ENCODE measurements at regions of chr1 and their contacts with region 1.

Region 1: GRCh38 chr1:202835548-202836090 is 24.9 kb downstream of the PCAT6 start:
- DNase-seq: peak; percentile 65
- H3K4me3 Mint-ChIP-seq: peak overlapping the region; percentile 40
- H3K27ac Mint-ChIP-seq: peak overlapping the region; percentile 62
- H3K4me1 Mint-ChIP-seq: peaks cover 65% of the 10 kb centered on the region
- H3K27me3 Mint-ChIP-seq: no peaks in the 10 kb centered on the region

Region 2: DNA sequence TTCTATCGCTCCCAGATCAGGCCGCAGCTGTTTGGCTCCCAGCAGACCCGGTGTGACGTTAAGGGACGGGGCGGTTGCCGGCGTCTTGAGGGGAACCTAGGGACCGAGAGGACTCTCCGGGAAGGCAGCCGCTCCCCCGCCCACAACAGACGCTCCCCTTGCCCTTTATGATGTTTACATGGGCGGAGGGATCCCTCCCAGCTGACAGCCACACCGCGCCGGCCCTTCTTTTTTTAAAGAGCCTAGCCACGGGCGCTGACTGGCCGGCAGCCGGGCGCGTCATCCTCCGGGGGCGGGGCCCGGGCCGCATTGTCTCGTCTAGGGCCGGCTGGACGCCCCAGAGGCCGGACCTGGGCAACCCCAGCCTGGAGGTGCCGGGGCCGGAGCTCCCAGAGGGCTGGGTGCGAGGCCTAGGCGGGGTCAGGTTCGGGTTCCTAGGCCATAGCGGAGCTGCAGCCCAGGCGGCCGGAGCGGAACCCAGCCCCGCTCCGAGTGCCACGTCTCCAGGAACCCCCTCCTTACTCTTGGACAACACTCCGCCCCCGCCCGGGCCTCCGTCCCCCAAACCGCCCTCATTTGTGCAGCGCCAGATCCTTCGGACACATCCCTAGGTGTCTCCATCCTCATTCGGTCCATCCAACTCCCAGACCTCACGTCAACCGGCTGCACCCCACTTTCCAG is 24.9 kb before region 1 on chr1 and contains the start of gene PCAT6:
- CTCF ChIA-PET with region 1: interaction called, 3 read pairs
- POLR2A ChIA-PET with region 1: interaction called, 20 read pairs
- DNase-seq: peak; percentile 91
- H3K4me3 Mint-ChIP-seq: peak within 1 kb of the TSS; percentile 98
- H3K27ac Mint-ChIP-seq: peak within 1 kb of the TSS; percentile 74
- H3K4me1 Mint-ChIP-seq: peaks cover 42% of the 10 kb centered on the region
- H3K27me3 Mint-ChIP-seq: peaks cover 27% of the 10 kb centered on the region
- total RNA-seq, gene PCAT6: 1.9 to 2.7 TPM

Region 3: GRCh38 chr1:202888531-202889360 is 53.1 kb after region 1 on chr1 and contains the start of gene RABIF:
- CTCF ChIA-PET with region 1: no interaction called
- POLR2A ChIA-PET with region 1: interaction called, 13 read pairs
- DNase-seq: peak; percentile 97
- H3K4me3 Mint-ChIP-seq: peak within 1 kb of the TSS; percentile 94
- H3K27ac Mint-ChIP-seq: peak within 1 kb of the TSS; percentile 99
- H3K4me1 Mint-ChIP-seq: peaks cover 33% of the 10 kb centered on the region
- H3K27me3 Mint-ChIP-seq: no peaks in the 10 kb centered on the region
- total RNA-seq, gene RABIF: 12.9 to 13.1 TPM

Measured in activated CD4-positive, alpha-beta memory T cell treated with anti-CD3 and anti-CD28 coated beads, Interleukin-2, amount 10 ng/mL, durations not matched to agents 7 days and 5 days (primary cell).